Uterus (tissue), 4 donors: ENCODE measurements at regions of chr3 and their contacts with region 1.

Region 1: GRCh38 chr3:172595641-172596393 is 72.6 kb upstream of the TNFSF10 start:
- DNase-seq: peak in 1 of 2 donors; percentile 49
- H3K4me3 ChIP-seq: peak overlapping the region in 1 of 2 donors; percentile 16
- H3K27ac ChIP-seq: peak overlapping the region; percentile 75 to 87
- H3K4me1 ChIP-seq: no peaks in the 10 kb centered on the region
- H3K27me3 ChIP-seq: no peaks in the 10 kb centered on the region
- CTCF ChIP-seq: peak; percentile 73 to 85 (median 78)
- POLR2A ChIP-seq: no peak

Region 2: DNA sequence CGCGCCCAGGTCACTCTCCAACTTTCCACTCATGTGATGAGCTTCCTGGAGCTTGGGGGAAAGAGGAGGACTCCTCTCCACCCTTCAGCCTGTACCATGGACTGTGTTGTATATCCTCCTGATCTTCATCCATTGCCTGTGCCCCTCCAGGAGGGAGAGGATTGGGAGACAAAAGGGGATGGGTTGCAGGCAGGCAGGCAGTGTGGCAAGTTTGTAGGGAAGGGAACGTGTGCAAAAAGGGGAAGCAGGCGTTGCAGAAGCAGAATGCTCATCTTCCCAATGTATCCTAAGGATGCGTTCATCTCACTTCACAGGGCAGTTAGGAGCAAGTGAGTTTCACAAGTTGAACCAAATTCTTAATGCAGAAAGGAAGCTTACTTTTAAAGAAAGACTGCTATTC is 119.5 kb before region 1 on chr3:
- intact Hi-C with region 1: loop called (anchors 10 kb)
- DNase-seq: no peak
- H3K4me3 ChIP-seq: no peak overlapping the region
- H3K27ac ChIP-seq: no peak overlapping the region
- H3K4me1 ChIP-seq: no peaks in the 10 kb centered on the region
- H3K27me3 ChIP-seq: no peaks in the 10 kb centered on the region
- CTCF ChIP-seq: no peak
- POLR2A ChIP-seq: no peak